ENCODE measurements at regions of chr10 and their contacts with region 1.

Region 1: GRCh38 chr10:106557951-106558733 is 606.4 kb downstream of the SORCS1 start:
- DNase-seq: peak; percentile 87
- ATAC-seq: peak; percentile 54
- H3K4me3 ChIP-seq: peak overlapping the region; percentile 27; the same call in 1 of the 2 replicates
- H3K27ac ChIP-seq: peak overlapping the region; percentile 99
- H3K4me1 ChIP-seq: peaks cover 64% of the 10 kb centered on the region
- H3K27me3 ChIP-seq: no peaks in the 10 kb centered on the region
- CTCF ChIP-seq: peak; percentile 43; the same call in 1 of the 2 replicates

Region 2: DNA sequence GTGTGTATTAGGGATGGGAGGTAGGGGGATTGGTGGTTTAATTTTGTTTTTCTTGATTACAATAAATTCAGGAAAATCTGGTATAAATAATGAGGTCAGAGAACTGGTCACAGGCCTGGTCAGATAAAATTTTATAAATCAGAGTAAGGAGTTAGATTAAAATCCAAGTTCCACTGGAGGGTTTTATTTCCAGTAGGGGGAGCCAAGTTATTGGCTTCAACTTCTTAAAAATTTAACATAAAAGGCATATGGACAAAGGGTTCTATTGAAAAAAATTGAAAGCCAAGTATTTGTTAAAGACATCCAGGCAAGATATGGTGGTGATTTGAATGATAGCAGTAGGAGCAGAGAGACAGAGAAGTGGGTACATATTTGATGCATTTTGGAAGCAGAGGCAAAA is 157.0 kb before region 1 on chr10:
- CTCF ChIA-PET with region 1: no interaction called
- POLR2A ChIA-PET with region 1: no interaction called
- intact Hi-C with region 1: loop called (anchors 1 kb)
- DNase-seq: peak; percentile 63
- ATAC-seq: no peak
- H3K4me3 ChIP-seq: no peak overlapping the region
- H3K27ac ChIP-seq: peak overlapping the region; percentile 85
- H3K4me1 ChIP-seq: peaks cover 31% of the 10 kb centered on the region
- H3K27me3 ChIP-seq: no peaks in the 10 kb centered on the region
- CTCF ChIP-seq: peak; percentile 70

Region 3: DNA sequence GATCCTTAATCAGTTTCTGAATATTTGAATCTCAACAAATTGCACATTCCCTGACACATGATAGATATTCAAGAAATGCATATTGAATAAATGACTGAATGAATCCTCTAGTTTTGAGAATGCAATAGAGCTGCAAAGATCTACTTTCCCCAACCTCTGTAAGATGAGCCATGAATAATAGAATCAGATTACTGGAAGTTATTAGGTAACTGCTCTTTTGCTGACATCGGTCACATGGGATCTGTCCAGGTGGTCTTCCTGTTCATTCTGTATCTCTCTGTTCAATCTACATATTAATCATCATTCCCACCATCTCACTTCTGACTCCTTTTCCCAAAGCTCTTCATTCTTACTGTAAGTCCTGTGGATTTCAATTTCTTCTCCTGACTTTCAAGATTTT is 32.3 kb before region 1 on chr10:
- CTCF ChIA-PET with region 1: no interaction called
- POLR2A ChIA-PET with region 1: no interaction called
- intact Hi-C with region 1: no loop called
- DNase-seq: no peak
- ATAC-seq: no peak
- H3K4me3 ChIP-seq: no peak overlapping the region
- H3K27ac ChIP-seq: no peak overlapping the region
- H3K4me1 ChIP-seq: no peaks in the 10 kb centered on the region
- H3K27me3 ChIP-seq: no peaks in the 10 kb centered on the region
- CTCF ChIP-seq: no peak